ENCODE measurements at regions of chr13 and their contacts with region 1.

Region 1: DNA sequence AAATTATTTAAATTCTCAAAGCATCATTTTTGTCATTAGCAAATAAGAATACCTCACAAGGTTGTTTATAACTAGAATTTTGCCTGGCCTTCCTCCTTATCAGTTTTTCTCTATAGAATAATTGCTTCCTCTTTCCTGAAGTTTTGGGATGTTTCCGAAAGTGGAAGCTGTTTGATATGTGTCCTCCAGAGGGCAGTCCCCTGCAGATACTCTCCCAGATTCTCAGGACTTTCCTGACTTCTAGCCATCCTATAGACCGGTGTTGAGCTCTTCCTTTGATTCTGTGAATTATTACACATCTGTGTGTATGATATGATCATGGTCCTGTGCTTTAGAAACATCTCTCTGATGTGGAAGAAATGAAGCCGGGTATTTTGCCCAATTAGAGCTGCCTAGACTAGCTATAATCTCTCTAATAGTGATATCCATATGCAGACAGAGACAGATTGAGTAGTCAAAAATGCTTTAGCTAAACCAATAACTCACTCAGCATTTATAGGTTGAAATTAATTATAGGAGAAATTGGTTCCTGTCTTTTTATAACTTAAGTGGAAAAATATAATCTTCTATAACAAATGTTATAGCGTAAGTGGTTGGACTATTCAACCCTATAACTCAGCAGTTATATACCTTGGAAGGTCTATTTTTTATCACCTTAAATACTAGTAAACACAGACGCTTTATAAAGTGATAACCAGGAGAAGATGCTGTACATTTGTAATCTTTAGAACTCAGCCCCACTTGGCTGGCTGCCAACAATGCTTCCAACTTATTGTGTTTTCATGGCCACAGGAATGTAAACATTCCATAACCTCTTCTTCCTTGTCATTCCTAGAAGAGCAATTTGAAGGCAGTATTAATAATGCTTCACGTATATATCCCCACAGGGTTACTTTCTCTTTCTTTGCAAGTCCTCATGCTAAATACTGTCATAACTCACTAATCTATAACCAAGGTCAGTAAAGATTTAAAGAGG is 201.0 kb upstream of the RXFP2 start:
- DNase-seq: peak in 1 of 2 experiments; percentile 18
- ATAC-seq: peak; percentile 67 to 70; a peak in 4 of 6 replicates
- H3K4me3 ChIP-seq: no peak overlapping the region
- H3K27ac ChIP-seq: no peak overlapping the region
- H3K4me1 ChIP-seq: no peaks in the 10 kb centered on the region
- CTCF ChIP-seq: peak; percentile 20; the same call in 2 of the 3 replicates
- EP300 ChIP-seq: no peak
- POLR2A ChIP-seq: no peak
- RAD21 ChIP-seq: peak; percentile 11 to 15; a peak in 1 of 5 replicates

Region 2: GRCh38 chr13:31742097-31742734 is 203.9 kb after region 1 on chr13:
- CTCF ChIA-PET with region 1: interaction called, 11 read pairs
- POLR2A ChIA-PET with region 1: no interaction called
- DNase-seq: peak; percentile 14 to 50
- ATAC-seq: peak; percentile 71 to 85; a peak in 5 of 6 replicates
- H3K4me3 ChIP-seq: no peak overlapping the region
- H3K27ac ChIP-seq: no peak overlapping the region
- H3K4me1 ChIP-seq: no peaks in the 10 kb centered on the region
- CTCF ChIP-seq: peak; percentile 72
- EP300 ChIP-seq: no peak
- POLR2A ChIP-seq: no peak
- RAD21 ChIP-seq: peak; percentile 70 to 79